ENCODE measurements at regions of chr17 and their contacts with region 1.

Region 1: GRCh38 chr17:38322091-38322779 is 21.5 kb downstream of the GPR179 start:
- DNase-seq: peak in 1 of 2 experiments; percentile 91
- H3K4me3 ChIP-seq: no peak overlapping the region
- H3K27ac ChIP-seq: no peak overlapping the region
- H3K4me1 ChIP-seq: peaks cover 0 to 10% (median 7%) of the 10 kb centered on the region in 4 experiments; a peak in 4 of 7 replicates
- H3K27me3 ChIP-seq: no peaks in the 10 kb centered on the region
- CTCF ChIP-seq: peak; percentile 58 to 80 (median 70); a peak in 3 of 4 replicates
- EP300 ChIP-seq: no peak
- POLR2A ChIP-seq: no peak
- RAD21 ChIP-seq: peak in 1 of 2 experiments; percentile 53; a peak in 2 of 4 replicates

Region 2: GRCh38 chr17:37710344-37710886 is 611.8 kb before region 1 on chr17:
- CTCF ChIA-PET with region 1: no interaction called
- POLR2A ChIA-PET with region 1: no interaction called
- DNase-seq: peak; percentile 58 to 73
- H3K4me3 ChIP-seq: peak overlapping the region in 1 of 4 experiments; percentile 18; a peak in 1 of 8 replicates
- H3K27ac ChIP-seq: peak overlapping the region; percentile 57
- H3K4me1 ChIP-seq: peaks cover 2 to 9% (median 2%) of the 10 kb centered on the region in 4 experiments; a peak in 5 of 7 replicates
- H3K27me3 ChIP-seq: no peaks in the 10 kb centered on the region; a peak in 2 of 7 replicates
- CTCF ChIP-seq: no peak
- EP300 ChIP-seq: peak in 1 of 2 experiments; percentile 77; a peak in 1 of 3 replicates
- POLR2A ChIP-seq: no peak
- RAD21 ChIP-seq: no peak

Region 3: DNA sequence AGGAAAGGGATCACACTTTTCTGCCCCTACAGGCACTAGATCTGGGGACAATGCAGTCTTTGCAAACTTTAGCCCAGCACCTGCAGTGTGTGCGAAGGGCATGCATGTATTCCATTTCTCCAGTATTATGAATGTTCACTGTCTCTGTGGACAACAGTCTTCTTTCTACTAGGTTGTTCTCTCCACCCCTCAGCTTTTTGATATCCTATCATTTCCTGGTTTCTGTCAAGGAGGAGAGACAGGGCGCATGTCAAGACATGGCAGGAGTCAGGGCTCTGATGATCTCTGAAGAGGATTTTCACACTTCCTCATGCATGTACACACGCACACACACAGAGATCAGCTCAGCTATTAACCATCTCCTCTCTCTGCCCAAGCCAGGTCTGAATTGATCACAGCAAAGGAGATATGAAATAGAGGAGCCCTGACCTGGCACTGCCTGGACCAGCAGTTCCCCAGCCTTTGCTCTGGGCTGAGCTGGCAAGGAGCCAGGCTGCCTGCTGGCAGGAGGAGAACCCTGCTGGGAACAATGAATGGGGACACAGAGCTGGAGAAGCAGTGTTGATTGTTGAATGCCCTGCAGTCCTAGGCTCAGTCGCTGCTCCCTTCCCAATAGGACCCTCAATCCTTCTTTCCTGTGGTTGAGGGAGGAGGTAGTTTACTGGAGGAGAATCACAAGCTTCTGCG is 18.9 kb after region 1 on chr17:
- CTCF ChIA-PET with region 1: interaction called, 192 read pairs
- POLR2A ChIA-PET with region 1: interaction called, 28 read pairs
- DNase-seq: peak in 1 of 2 experiments; percentile 17
- H3K4me3 ChIP-seq: no peak overlapping the region
- H3K27ac ChIP-seq: no peak overlapping the region
- H3K4me1 ChIP-seq: peaks cover 0 to 9% (median 3%) of the 10 kb centered on the region in 4 experiments; a peak in 3 of 7 replicates
- H3K27me3 ChIP-seq: no peaks in the 10 kb centered on the region
- CTCF ChIP-seq: no peak
- EP300 ChIP-seq: no peak
- POLR2A ChIP-seq: no peak
- RAD21 ChIP-seq: no peak

Measured in H1 (cell line).